Right lobe of liver (tissue), 6 donors: ENCODE measurements at regions of chr13 and their contacts with region 1.

Region 1: GRCh38 chr13:102197193-102197592 is 204.7 kb downstream of the FGF14 start:
- DNase-seq: no peak
- ATAC-seq: peak; percentile 76 to 89 (median 84)
- H3K4me3 ChIP-seq: no peak overlapping the region
- H3K27ac ChIP-seq: no peak overlapping the region
- H3K4me1 ChIP-seq: peaks cover 0 to 14% (median 5%) of the 10 kb centered on the region in 4 donors
- H3K27me3 ChIP-seq: no peaks in the 10 kb centered on the region
- CTCF ChIP-seq: peak; percentile 50 to 61 (median 51)
- POLR2A ChIP-seq: no peak

Region 2: GRCh38 chr13:102452831-102453230 is 255.6 kb after region 1 on chr13:
- intact Hi-C with region 1: loop called in 1 of 2 experiments (anchors 10 kb)
- DNase-seq: no peak
- ATAC-seq: no peak
- H3K4me3 ChIP-seq: no peak overlapping the region
- H3K27ac ChIP-seq: no peak overlapping the region
- H3K4me1 ChIP-seq: no peaks in the 10 kb centered on the region
- H3K27me3 ChIP-seq: no peaks in the 10 kb centered on the region
- CTCF ChIP-seq: no peak
- POLR2A ChIP-seq: no peak